BJ (cell line): ENCODE measurements at regions of chr1 and their contacts with region 1.

Region 1: GRCh38 chr1:35451125-35451528 is 106.1 kb downstream of the KIAA0319L start:
- DNase-seq: no peak
- H3K4me3 ChIP-seq: no peak overlapping the region
- H3K27me3 ChIP-seq: no peaks in the 10 kb centered on the region
- CTCF ChIP-seq: peak; percentile 87

Region 2: DNA sequence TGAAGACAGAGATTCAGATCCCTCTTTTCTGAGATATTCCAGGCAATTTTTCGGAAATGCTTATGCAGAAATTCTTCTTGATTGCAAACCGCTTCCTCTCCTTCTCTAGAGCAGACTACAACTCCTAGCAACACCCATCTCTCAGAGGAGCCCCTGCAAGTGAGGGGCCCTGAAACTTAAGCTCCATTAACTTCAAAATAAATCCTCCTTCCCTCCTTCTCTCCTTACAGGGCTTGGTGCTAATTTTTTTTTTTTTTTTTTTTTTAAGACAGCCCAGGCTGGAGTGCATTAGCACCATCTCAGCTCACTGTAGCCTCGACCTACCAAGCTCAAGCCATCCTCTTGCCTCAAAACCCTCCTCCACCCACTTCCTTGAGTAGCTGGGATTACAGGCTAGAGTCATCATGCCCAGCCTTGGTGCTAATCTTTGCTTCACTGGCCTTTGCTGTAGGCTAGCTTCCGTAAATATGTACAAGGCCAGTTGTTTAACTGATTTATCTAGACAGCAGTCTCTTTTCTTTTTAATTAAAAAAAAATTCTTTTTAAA is 228.0 kb before region 1 on chr1:
- CTCF ChIA-PET with region 1: no interaction called
- POLR2A ChIA-PET with region 1: no interaction called
- DNase-seq: no peak
- H3K4me3 ChIP-seq: no peak overlapping the region
- H3K27me3 ChIP-seq: no peaks in the 10 kb centered on the region; the same call in 1 of the 2 replicates
- CTCF ChIP-seq: no peak

Region 3: DNA sequence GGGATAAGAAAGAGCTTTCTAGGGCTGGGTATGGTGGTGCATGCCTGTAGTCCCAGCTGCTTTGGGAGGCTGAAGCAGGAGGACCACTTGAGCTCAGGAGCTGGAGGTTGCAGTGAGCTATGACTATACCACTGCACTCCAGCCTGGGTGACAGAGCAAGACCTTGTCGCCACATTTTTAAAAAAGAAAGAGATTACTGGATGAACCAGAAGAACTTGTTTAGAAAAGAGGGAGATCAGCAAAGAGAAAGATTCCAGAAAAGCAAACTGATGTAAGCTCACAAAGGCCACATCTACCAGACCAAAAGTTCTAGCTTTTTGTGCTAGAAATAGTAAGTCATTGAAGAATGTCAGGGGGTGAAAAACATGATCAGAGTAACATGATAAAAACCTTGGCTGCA is 11.5 kb before region 1 on chr1:
- CTCF ChIA-PET with region 1: interaction called, 31 read pairs
- POLR2A ChIA-PET with region 1: no interaction called
- DNase-seq: no peak
- H3K4me3 ChIP-seq: no peak overlapping the region
- H3K27me3 ChIP-seq: no peaks in the 10 kb centered on the region
- CTCF ChIP-seq: no peak

Region 4: DNA sequence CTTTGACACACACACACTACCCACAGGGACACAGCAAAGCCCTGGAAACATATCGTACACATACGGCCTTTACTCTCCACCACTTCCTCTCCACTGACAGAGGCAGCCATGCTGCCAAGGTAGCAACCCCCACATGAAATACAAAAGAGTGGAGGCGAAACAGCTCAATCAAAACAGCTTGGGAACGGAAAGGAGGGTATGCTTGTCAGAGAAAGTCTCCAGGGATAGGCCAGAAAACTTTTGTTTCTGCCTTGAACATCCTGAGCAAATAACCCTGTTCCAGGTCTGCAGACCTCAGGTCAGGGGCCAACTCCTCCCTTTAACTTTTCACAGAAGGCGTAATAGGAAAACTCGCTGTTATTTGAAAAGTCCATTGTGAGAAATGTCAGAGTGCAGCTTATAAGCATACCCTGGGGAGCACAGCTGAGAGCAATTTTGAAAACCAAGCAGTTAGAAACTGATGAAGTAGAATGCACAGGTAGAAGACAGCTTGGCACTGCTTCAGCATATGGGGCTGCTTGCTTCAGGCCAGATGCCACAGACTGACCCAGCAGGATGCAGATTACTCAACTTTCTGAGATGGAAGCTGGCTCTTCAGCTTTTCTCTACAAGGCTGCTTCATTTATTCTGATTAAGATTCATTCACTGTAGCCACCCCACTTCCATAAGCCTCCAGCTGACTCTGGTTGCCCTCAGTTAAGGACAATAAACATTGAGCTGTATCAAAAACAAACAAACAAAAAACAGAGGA is 88.1 kb after region 1 on chr1:
- CTCF ChIA-PET with region 1: interaction called, 13 read pairs
- POLR2A ChIA-PET with region 1: interaction called, 3 read pairs
- DNase-seq: no peak
- H3K4me3 ChIP-seq: no peak overlapping the region
- H3K27me3 ChIP-seq: no peaks in the 10 kb centered on the region
- CTCF ChIP-seq: no peak

Region 5: DNA sequence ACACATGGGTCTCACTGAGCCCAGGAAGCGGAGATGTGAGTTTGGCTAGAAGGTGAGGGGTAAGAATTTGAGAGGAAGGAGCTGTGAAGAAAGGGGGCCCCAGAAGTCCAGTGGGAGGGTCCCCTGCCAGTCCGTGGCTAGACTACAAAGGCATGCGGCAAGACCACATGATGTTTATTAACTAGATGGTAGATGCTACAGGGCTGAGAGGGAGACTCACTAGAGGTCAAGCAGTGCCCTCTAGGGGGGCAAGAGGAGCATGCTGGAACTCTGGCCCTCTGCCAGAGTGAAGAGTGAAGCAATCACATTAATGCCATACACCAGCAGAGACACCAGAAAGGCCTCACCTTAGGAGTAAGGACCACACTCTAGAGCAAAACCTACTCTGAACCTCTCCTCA is 93.9 kb after region 1 on chr1:
- CTCF ChIA-PET with region 1: interaction called, 17 read pairs
- POLR2A ChIA-PET with region 1: interaction called, 3 read pairs
- DNase-seq: no peak
- H3K4me3 ChIP-seq: no peak overlapping the region
- H3K27me3 ChIP-seq: no peaks in the 10 kb centered on the region
- CTCF ChIP-seq: peak; percentile 14; the same call in 1 of the 2 replicates

Region 6: DNA sequence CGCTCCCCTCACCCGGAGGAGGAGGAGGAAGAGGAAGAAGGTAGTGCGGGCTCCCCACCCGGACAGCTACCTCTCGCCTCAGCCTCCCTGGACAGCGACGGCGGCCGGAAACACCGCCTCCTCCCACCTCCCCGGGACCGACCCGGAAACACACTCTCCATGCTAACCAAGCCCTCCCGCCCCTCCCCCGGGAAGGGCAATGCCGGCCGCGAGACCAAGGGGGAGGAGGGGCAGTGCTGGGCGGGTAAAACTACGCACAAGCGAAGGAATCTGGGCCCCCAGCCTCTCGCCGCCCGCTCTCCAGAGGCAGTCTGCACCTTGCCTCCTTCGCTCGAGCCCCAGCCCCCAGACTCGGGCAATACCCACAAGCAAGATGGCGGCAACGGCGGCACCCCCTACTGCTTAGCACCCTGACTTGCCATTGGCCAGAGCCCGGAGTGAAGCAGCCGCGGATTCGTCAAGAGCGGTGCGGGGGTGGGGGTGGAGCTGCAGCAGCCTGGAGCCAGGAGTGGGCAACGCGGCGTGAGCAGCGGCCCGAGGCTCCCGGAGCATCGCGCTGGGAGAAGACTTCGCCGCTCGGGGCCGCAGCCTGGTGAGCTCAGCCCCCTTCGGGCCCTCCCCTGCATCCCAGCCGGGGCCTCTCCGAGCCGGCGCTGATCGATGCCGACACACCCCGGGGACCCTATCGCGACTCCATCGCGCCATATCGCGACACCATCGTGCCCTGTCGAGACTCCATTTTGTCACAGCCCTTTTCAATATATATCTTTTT is 106.4 kb after region 1 on chr1 and contains the starts of genes KIAA0319L and NCDN:
- CTCF ChIA-PET with region 1: interaction called, 60 read pairs
- POLR2A ChIA-PET with region 1: no interaction called
- DNase-seq: peak; percentile 68
- H3K4me3 ChIP-seq: peak within 1 kb of the TSS; percentile 92
- H3K27me3 ChIP-seq: no peaks in the 10 kb centered on the region
- CTCF ChIP-seq: no peak
- polyA plus RNA-seq, gene KIAA0319L: 33.4 and 36.3 TPM in 2 replicates
- polyA plus RNA-seq, gene NCDN: 12.4 and 25.8 TPM in 2 replicates

Region 7: DNA sequence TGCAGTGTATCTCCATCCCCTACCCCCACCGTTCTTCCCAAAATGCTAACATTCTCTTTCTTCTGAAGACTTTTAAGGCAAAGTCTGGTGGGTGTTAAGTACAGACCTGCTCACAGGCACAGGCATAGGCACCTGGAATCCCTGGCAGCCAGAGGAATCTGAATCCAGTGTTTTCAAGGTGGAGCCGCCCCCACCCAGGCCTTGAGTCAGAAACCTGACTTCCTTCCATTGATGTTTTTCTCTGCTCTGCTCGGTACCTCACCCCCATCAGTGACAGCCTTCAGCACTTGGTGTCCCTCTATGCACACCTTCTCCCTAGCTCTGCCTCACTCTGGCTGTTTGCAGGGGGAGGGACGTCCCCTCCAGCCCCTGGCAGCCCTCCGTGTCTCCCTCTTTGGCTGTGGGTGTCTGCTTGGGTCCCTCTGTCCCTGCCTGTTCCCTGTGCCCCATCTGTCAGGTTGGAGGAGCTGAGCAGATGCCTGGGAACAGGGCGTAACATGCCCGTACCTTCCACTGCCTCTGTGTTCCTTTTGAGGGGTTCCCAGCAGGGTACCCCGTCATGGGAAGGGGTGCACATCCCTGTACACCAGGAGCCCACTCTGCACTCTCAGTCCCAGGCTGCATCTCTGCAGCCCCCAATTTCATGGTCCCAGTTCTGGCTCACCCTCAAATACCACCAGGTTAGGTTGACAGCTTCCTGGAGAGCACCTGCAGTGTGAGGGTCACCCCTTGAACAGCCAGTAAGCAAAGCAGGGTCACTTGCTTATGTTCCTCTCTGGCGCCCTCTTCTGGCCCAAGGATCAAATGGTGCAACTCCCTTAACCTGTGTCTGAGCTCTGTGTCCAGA is 113.1 kb after region 1 on chr1:
- CTCF ChIA-PET with region 1: interaction called, 161 read pairs
- POLR2A ChIA-PET with region 1: interaction called, 3 read pairs
- DNase-seq: no peak
- H3K4me3 ChIP-seq: no peak overlapping the region
- H3K27me3 ChIP-seq: no peaks in the 10 kb centered on the region
- CTCF ChIP-seq: peak; percentile 86